Naive thymus-derived CD4-positive, alpha-beta T cell (primary cell): ENCODE measurements at regions of chr1 and their contacts with region 1.

Region 1: GRCh38 chr1:117501281-117501680 is 104.6 kb upstream of the TENT5C start:
- DNase-seq: no peak
- ATAC-seq: no peak
- H3K4me3 ChIP-seq: no peak overlapping the region
- H3K4me3 Mint-ChIP-seq: no peak overlapping the region
- H3K27ac ChIP-seq: no peak overlapping the region
- H3K27ac Mint-ChIP-seq: no peak overlapping the region
- H3K4me1 ChIP-seq: no peaks in the 10 kb centered on the region
- H3K4me1 Mint-ChIP-seq: no peaks in the 10 kb centered on the region
- H3K27me3 ChIP-seq: no peaks in the 10 kb centered on the region
- H3K27me3 Mint-ChIP-seq: no peaks in the 10 kb centered on the region

Region 2: GRCh38 chr1:117312225-117313138 is 188.8 kb before region 1 on chr1:
- CTCF ChIA-PET with region 1: no interaction called
- POLR2A ChIA-PET with region 1: no interaction called
- intact Hi-C with region 1: loop called in 1 of 2 experiments (anchors 10 kb)
- DNase-seq: peak in 6 of 9 donors; percentile 3 to 41 (median 18)
- ATAC-seq: no peak
- H3K4me3 ChIP-seq: no peak overlapping the region
- H3K4me3 Mint-ChIP-seq: no peak overlapping the region
- H3K27ac ChIP-seq: no peak overlapping the region
- H3K27ac Mint-ChIP-seq: no peak overlapping the region
- H3K4me1 ChIP-seq: no peaks in the 10 kb centered on the region
- H3K4me1 Mint-ChIP-seq: peaks cover 0 to 2% (median 0%) of the 10 kb centered on the region in 7 donors
- H3K27me3 ChIP-seq: no peaks in the 10 kb centered on the region
- H3K27me3 Mint-ChIP-seq: peaks cover 0 to 12% (median 0%) of the 10 kb centered on the region in 5 donors

Region 3: DNA sequence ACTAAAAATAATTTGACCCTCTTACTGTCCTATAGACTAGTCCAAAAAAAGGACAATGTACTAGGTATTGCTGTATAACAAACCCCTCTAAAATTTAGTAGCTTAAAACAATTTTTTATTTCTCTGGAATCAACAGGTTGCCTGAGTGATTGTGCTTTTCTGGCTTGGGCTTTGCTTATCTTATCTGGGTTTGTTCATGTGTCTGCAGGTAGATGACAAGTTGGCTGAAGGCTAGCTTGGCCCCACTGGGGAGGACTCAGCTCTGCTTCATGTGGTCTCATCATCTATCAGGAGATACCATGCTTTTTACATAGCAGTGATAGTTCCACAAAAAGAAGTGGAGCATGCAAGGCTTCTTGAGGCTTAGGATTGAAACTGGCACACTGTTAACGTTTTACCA is 19.9 kb before region 1 on chr1:
- CTCF ChIA-PET with region 1: no interaction called
- POLR2A ChIA-PET with region 1: no interaction called
- intact Hi-C with region 1: loop called in 1 of 2 experiments (anchors 2 kb)
- DNase-seq: no peak
- ATAC-seq: no peak
- H3K4me3 ChIP-seq: no peak overlapping the region
- H3K4me3 Mint-ChIP-seq: no peak overlapping the region
- H3K27ac ChIP-seq: no peak overlapping the region
- H3K27ac Mint-ChIP-seq: no peak overlapping the region
- H3K4me1 ChIP-seq: no peaks in the 10 kb centered on the region
- H3K4me1 Mint-ChIP-seq: peaks cover 0 to 2% (median 0%) of the 10 kb centered on the region in 7 donors
- H3K27me3 ChIP-seq: no peaks in the 10 kb centered on the region
- H3K27me3 Mint-ChIP-seq: no peaks in the 10 kb centered on the region

Region 4: DNA sequence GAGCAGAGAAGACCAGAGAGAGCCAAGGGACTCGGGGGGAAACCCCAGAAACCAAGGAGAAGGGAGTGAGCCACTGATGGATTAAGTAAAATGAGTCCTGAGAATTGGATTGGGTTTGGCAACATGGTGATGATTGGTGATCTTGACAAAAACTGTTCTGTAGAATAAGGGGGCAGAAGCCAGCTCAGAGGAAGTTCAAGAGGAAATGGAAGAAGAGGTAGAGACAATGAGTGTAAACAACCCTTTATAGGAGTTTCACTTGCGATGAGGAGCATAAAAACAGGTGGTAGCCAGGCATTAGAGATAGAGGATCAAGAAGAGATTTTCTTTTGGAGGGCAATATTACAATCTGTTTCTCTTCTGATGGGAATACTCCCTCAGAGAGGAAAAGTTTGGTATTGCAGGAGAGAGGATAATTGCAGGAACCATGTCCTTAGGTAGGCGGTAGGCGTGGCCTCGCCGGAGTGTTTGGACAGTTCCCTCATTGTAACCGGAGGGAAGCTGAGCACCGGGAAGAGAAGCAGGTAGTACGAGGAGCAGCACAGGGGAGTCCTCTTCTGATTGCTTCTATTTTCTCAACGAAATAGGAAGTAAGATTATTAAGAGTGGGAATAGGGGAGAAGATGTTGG is 36.1 kb after region 1 on chr1:
- CTCF ChIA-PET with region 1: no interaction called
- POLR2A ChIA-PET with region 1: no interaction called
- intact Hi-C with region 1: no loop called
- DNase-seq: peak in 2 of 9 donors; percentile 14 to 15
- ATAC-seq: no peak
- H3K4me3 ChIP-seq: no peak overlapping the region
- H3K4me3 Mint-ChIP-seq: no peak overlapping the region
- H3K27ac ChIP-seq: no peak overlapping the region
- H3K27ac Mint-ChIP-seq: no peak overlapping the region
- H3K4me1 ChIP-seq: peaks cover 7 to 8% of the 10 kb centered on the region in 2 donors
- H3K4me1 Mint-ChIP-seq: peaks cover 0 to 20% (median 3%) of the 10 kb centered on the region in 7 donors
- H3K27me3 ChIP-seq: no peaks in the 10 kb centered on the region
- H3K27me3 Mint-ChIP-seq: no peaks in the 10 kb centered on the region

Region 5: GRCh38 chr1:117821782-117822447 is 320.6 kb after region 1 on chr1:
- CTCF ChIA-PET with region 1: no interaction called
- POLR2A ChIA-PET with region 1: no interaction called
- intact Hi-C with region 1: no loop called
- DNase-seq: no peak
- ATAC-seq: no peak
- H3K4me3 ChIP-seq: no peak overlapping the region
- H3K4me3 Mint-ChIP-seq: no peak overlapping the region
- H3K27ac ChIP-seq: no peak overlapping the region
- H3K27ac Mint-ChIP-seq: no peak overlapping the region
- H3K4me1 ChIP-seq: no peaks in the 10 kb centered on the region
- H3K4me1 Mint-ChIP-seq: no peaks in the 10 kb centered on the region
- H3K27me3 ChIP-seq: no peaks in the 10 kb centered on the region
- H3K27me3 Mint-ChIP-seq: peaks cover 7 to 23% (median 17%) of the 10 kb centered on the region in 5 donors

Region 6: GRCh38 chr1:119132179-119132578 is 1630.9 kb after region 1 on chr1:
- CTCF ChIA-PET with region 1: no interaction called
- POLR2A ChIA-PET with region 1: no interaction called
- intact Hi-C with region 1: no loop called
- DNase-seq: no peak
- ATAC-seq: no peak
- H3K4me3 ChIP-seq: no peak overlapping the region
- H3K4me3 Mint-ChIP-seq: no peak overlapping the region
- H3K27ac ChIP-seq: no peak overlapping the region
- H3K27ac Mint-ChIP-seq: no peak overlapping the region
- H3K4me1 ChIP-seq: no peaks in the 10 kb centered on the region
- H3K4me1 Mint-ChIP-seq: peaks cover 0 to 14% (median 0%) of the 10 kb centered on the region in 7 donors
- H3K27me3 ChIP-seq: no peaks in the 10 kb centered on the region
- H3K27me3 Mint-ChIP-seq: no peaks in the 10 kb centered on the region